Left ventricle myocardium inferior (tissue), 1 donor: ENCODE measurements at regions of chr11 and their contacts with region 1.

Region 1: GRCh38 chr11:10208131-10208575 is 85.9 kb downstream of the SBF2 start:
- DNase-seq: no peak
- H3K4me3 ChIP-seq: no peak overlapping the region
- H3K27ac ChIP-seq: no peak overlapping the region
- H3K4me1 ChIP-seq: peaks cover 34% of the 10 kb centered on the region
- H3K27me3 ChIP-seq: no peaks in the 10 kb centered on the region
- CTCF ChIP-seq: peak; percentile 78

Region 2: DNA sequence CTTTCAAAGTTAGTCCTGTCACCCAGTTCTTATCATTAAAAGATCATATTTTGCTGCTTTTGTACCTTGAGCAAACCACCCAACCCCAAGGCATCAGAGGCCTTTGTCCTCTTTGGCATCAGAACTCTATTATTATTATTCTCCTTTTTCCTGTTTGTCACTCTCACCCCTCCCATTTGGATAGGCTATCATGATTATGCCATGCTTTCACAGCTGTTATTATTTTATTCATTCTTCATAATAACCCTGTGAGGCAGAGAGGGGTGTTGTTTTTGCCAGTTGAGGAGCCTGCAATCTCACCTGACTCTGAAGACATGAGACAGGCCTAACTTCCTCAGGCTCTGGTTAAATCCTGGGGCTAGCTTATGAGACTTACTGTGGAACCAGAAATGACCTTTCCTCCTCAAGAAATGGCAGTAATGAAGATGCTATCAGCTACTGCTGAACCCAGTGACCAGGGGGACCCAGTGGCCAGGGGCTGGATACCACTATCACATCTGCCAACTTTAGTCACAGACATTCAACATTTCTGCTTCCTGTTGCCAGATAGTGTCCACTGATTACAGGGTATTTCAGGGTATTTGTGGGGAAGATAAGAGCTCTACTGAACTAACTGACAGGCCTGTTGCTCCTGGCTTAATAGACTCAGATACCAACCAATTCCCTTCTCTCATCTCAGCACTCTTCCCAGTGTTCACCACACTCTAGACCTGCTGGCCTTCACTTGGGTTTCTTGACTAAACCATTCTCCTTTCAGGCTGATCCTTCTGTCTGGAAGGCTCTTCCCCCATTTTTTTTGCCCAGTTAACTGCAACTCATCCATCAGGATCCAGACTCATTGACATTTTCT is 556.0 kb before region 1 on chr11:
- intact Hi-C with region 1: no loop called
- DNase-seq: no peak
- H3K4me3 ChIP-seq: no peak overlapping the region
- H3K27ac ChIP-seq: no peak overlapping the region
- H3K4me1 ChIP-seq: no peaks in the 10 kb centered on the region
- H3K27me3 ChIP-seq: no peaks in the 10 kb centered on the region
- CTCF ChIP-seq: no peak

Region 3: GRCh38 chr11:10307442-10308207 is 99.5 kb after region 1 on chr11:
- intact Hi-C with region 1: loop called (anchors 5 kb)
- DNase-seq: peak; percentile 84
- H3K4me3 ChIP-seq: peak overlapping the region; percentile 82
- H3K27ac ChIP-seq: peak overlapping the region; percentile 91
- H3K4me1 ChIP-seq: peaks cover 80% of the 10 kb centered on the region
- H3K27me3 ChIP-seq: no peaks in the 10 kb centered on the region
- CTCF ChIP-seq: peak; percentile 98